HepG2 (cell line): ENCODE measurements at regions of chr11 and their contacts with region 1.

Region 1: GRCh38 chr11:77187776-77188632 is 60.0 kb downstream of the MYO7A start:
- DNase-seq: peak; percentile 73
- ATAC-seq: peak; percentile 87
- H3K4me3 ChIP-seq: no peak overlapping the region
- H3K27ac ChIP-seq: no peak overlapping the region
- H3K4me1 ChIP-seq: no peaks in the 10 kb centered on the region
- H3K27me3 ChIP-seq: no peaks in the 10 kb centered on the region
- CTCF ChIP-seq: peak; percentile 94
- EP300 ChIP-seq: no peak
- POLR2A ChIP-seq: no peak
- RAD21 ChIP-seq: peak; percentile 85

Region 2: DNA sequence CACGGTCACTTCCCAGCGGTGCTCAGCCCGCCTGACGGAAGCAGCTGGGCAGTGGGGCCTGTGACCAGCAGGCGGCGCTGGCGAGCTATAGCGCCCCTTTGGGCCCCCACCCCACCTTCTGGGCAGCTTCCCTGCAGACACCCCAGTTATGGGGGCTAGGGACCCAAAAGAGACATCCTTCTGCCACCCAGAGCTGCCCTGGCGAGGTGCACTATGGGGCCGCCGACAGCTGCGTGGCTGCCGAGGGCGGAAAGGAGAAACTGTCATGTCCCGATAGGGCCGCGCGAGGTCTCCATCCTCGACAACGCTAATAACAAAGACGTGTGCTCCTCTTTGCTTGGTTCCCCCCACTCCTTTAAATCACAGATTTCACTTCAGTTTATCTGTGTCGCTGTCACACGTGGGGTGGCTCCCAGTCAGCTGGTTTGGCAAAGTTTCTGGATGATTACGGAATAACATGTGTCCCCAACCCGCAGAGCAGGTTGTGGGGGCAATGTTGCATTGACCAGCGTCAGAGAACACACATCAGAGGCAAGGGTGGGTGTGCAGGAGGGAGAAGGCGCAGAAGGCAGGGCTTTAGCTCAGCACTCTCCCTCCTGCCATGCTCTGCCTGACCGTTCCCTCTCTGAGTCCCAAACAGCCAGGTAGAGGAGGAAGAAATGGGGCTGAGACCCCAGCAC is 60.6 kb before region 1 on chr11:
- CTCF ChIA-PET with region 1: interaction called, 150 read pairs
- POLR2A ChIA-PET with region 1: interaction called, 9 read pairs
- in situ Hi-C with region 1: loop called (anchors 5 kb)
- intact Hi-C with region 1: loop called (anchors 1 kb)
- DNase-seq: no peak
- ATAC-seq: peak; percentile 54
- H3K4me3 ChIP-seq: peak overlapping the region; percentile 53 to 80 (median 54); a peak in 5 of 6 replicates
- H3K27ac ChIP-seq: peak overlapping the region; percentile 12
- H3K4me1 ChIP-seq: peaks cover 57% of the 10 kb centered on the region
- H3K27me3 ChIP-seq: peaks cover 0 to 13% of the 10 kb centered on the region in 2 experiments; a peak in 1 of 5 replicates
- CTCF ChIP-seq: peak; percentile 98
- EP300 ChIP-seq: no peak
- POLR2A ChIP-seq: no peak
- RAD21 ChIP-seq: peak; percentile 99

Region 3: GRCh38 chr11:77175021-77175842 is 12.8 kb before region 1 on chr11:
- CTCF ChIA-PET with region 1: no interaction called
- POLR2A ChIA-PET with region 1: no interaction called
- in situ Hi-C with region 1: no loop called
- intact Hi-C with region 1: loop called (anchors 2 kb)
- DNase-seq: no peak
- ATAC-seq: no peak
- H3K4me3 ChIP-seq: no peak overlapping the region
- H3K27ac ChIP-seq: no peak overlapping the region
- H3K4me1 ChIP-seq: peaks cover 56% of the 10 kb centered on the region
- H3K27me3 ChIP-seq: no peaks in the 10 kb centered on the region
- CTCF ChIP-seq: no peak
- EP300 ChIP-seq: no peak
- POLR2A ChIP-seq: no peak
- RAD21 ChIP-seq: no peak

Region 4: DNA sequence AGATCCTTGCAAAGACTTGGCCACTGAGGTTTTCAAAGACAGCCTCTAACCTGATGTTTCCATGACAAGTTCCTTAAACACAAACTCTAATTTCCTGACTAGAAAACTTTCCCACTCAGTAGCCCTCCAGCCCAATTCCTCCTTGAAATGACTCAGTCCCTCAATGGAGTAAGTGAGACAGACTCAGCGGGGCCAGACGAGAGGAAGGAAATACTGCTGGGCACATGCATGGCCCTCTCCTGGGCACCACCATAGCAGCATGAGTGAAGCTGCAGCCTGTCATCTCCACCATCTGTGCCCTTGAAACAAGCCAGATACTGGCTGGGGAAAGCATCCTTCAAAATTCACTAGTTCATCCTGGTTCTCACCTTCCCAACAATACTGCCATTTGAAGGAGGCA is 189.7 kb after region 1 on chr11:
- CTCF ChIA-PET with region 1: no interaction called
- POLR2A ChIA-PET with region 1: no interaction called
- in situ Hi-C with region 1: no loop called
- intact Hi-C with region 1: loop called (anchors 10 kb)
- DNase-seq: no peak
- ATAC-seq: no peak
- H3K4me3 ChIP-seq: no peak overlapping the region
- H3K27ac ChIP-seq: no peak overlapping the region
- H3K4me1 ChIP-seq: no peaks in the 10 kb centered on the region
- H3K27me3 ChIP-seq: no peaks in the 10 kb centered on the region
- CTCF ChIP-seq: no peak
- EP300 ChIP-seq: no peak
- POLR2A ChIP-seq: no peak
- RAD21 ChIP-seq: no peak